Prostate gland (tissue), 2 donors: ENCODE measurements at regions of chr18 and their contacts with region 1.

Region 1: GRCh38 chr18:31497837-31498573 is at the start of gene DSG2:
- DNase-seq: peak; percentile 86
- H3K4me3 ChIP-seq: peak within 1 kb of the TSS; percentile 65 to 66
- H3K27ac ChIP-seq: peak within 1 kb of the TSS; percentile 89 to 92
- H3K4me1 ChIP-seq: no peaks in the 10 kb centered on the region
- H3K27me3 ChIP-seq: no peaks in the 10 kb centered on the region
- CTCF ChIP-seq: peak in 1 of 4 experiments; percentile 19
- POLR2A ChIP-seq: peak; percentile 76
- total RNA-seq, gene DSG2: 19.5 to 63.2 TPM

Region 2: GRCh38 chr18:31447530-31448191 is 50.3 kb before region 1 on chr18 and contains the start of gene DSG3:
- intact Hi-C with region 1: loop called (anchors 10 kb)
- DNase-seq: no peak
- H3K4me3 ChIP-seq: no peak within 1 kb of the TSS
- H3K27ac ChIP-seq: no peak within 1 kb of the TSS
- H3K4me1 ChIP-seq: no peaks in the 10 kb centered on the region
- H3K27me3 ChIP-seq: no peaks in the 10 kb centered on the region
- CTCF ChIP-seq: no peak
- POLR2A ChIP-seq: no peak
- total RNA-seq, gene DSG3: 1.3 to 2.3 TPM